CD8-positive, alpha-beta memory T cell (primary cell): ENCODE measurements at regions of chr16 and their contacts with region 1.

Region 1: GRCh38 chr16:67159593-67160406 is at the starts of genes FBXL8 and TRADD:
- DNase-seq: peak; percentile 74 to 84 (median 80)
- H3K4me3 ChIP-seq: peak within 1 kb of the TSS; percentile 95
- H3K4me3 Mint-ChIP-seq: peak within 1 kb of the TSS; percentile 79 to 96 (median 94)
- H3K27ac ChIP-seq: peak within 1 kb of the TSS; percentile 93
- H3K27ac Mint-ChIP-seq: peak within 1 kb of the TSS; percentile 94 to 99 (median 98)
- H3K4me1 ChIP-seq: peaks cover 78% of the 10 kb centered on the region
- H3K4me1 Mint-ChIP-seq: peaks cover 45 to 77% (median 52%) of the 10 kb centered on the region in 3 donors
- H3K27me3 ChIP-seq: peaks cover 26% of the 10 kb centered on the region
- H3K27me3 Mint-ChIP-seq: peaks cover 24 to 29% of the 10 kb centered on the region in 2 donors
- total RNA-seq, gene FBXL8: 10.5 to 14.3 TPM
- total RNA-seq, gene TRADD: 23.8 to 28.7 TPM

Region 2: GRCh38 chr16:66977341-66978113 is 182.3 kb before region 1 on chr16:
- CTCF ChIA-PET with region 1: interaction called, 56 read pairs
- POLR2A ChIA-PET with region 1: no interaction called
- DNase-seq: peak; percentile 75 to 89 (median 81)
- H3K4me3 ChIP-seq: no peak overlapping the region
- H3K4me3 Mint-ChIP-seq: no peak overlapping the region
- H3K27ac ChIP-seq: no peak overlapping the region
- H3K27ac Mint-ChIP-seq: peak overlapping the region in 1 of 8 donors; percentile 58
- H3K4me1 ChIP-seq: no peaks in the 10 kb centered on the region
- H3K4me1 Mint-ChIP-seq: peaks cover 7 to 22% (median 19%) of the 10 kb centered on the region in 3 donors
- H3K27me3 ChIP-seq: no peaks in the 10 kb centered on the region
- H3K27me3 Mint-ChIP-seq: peaks cover 2 to 5% of the 10 kb centered on the region in 2 donors

Region 3: DNA sequence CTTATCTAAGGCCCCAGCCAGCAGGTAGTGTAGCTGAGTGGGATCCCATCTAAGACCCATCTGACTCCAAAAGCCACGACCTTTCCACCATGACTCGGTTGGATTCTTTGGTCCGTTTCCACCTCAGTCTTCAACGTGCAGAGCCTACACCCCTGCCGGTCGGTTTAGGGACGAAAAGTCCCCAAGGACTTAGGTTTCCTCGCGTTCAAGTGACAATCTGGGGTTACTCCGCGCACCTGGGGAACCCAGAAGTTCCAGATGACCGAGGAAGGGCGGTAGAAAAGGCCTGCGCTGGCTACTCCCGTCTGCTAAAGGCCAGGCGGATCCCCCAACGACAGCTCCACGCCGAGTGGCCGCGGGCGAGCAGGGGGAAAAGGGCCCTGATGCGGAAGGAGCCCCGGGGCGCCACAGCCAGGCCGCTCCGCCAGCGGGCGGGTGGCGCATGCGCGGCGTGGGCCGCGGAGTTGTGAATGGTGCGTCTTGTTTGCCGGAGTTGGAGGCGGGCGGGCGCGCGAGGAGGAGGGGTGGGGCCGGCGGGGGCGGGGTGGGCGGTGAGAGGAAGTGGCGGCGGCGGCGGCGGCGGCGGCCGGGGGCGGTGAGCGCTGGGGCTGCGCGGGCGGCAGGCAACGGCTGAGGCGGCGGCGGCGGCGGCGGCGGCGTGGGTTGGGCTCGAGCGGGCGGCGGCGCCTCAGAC is 131.1 kb before region 1 on chr16 and contains the start of gene CBFB:
- CTCF ChIA-PET with region 1: interaction called, 15 read pairs
- POLR2A ChIA-PET with region 1: interaction called, 10 read pairs
- DNase-seq: peak; percentile 91 to 97 (median 96)
- H3K4me3 ChIP-seq: peak within 1 kb of the TSS; percentile 89
- H3K4me3 Mint-ChIP-seq: peak within 1 kb of the TSS; percentile 88 to 98 (median 90)
- H3K27ac ChIP-seq: peak within 1 kb of the TSS; percentile 94
- H3K27ac Mint-ChIP-seq: peak within 1 kb of the TSS; percentile 91 to 99 (median 96)
- H3K4me1 ChIP-seq: peaks cover 39% of the 10 kb centered on the region
- H3K4me1 Mint-ChIP-seq: peaks cover 38 to 46% (median 44%) of the 10 kb centered on the region in 3 donors
- H3K27me3 ChIP-seq: no peaks in the 10 kb centered on the region
- H3K27me3 Mint-ChIP-seq: no peaks in the 10 kb centered on the region
- total RNA-seq, gene CBFB: 132 to 141 TPM

Region 4: GRCh38 chr16:67089101-67089500 is 70.7 kb before region 1 on chr16:
- CTCF ChIA-PET with region 1: no interaction called
- POLR2A ChIA-PET with region 1: no interaction called
- DNase-seq: no peak
- H3K4me3 ChIP-seq: no peak overlapping the region
- H3K4me3 Mint-ChIP-seq: no peak overlapping the region
- H3K27ac ChIP-seq: no peak overlapping the region
- H3K27ac Mint-ChIP-seq: peak overlapping the region in 2 of 8 donors; percentile 8 to 51
- H3K4me1 ChIP-seq: no peaks in the 10 kb centered on the region
- H3K4me1 Mint-ChIP-seq: peaks cover 9 to 20% (median 20%) of the 10 kb centered on the region in 3 donors
- H3K27me3 ChIP-seq: no peaks in the 10 kb centered on the region
- H3K27me3 Mint-ChIP-seq: no peaks in the 10 kb centered on the region

Region 5: GRCh38 chr16:67137605-67138004 is 22.2 kb before region 1 on chr16:
- CTCF ChIA-PET with region 1: interaction called, 48 read pairs
- POLR2A ChIA-PET with region 1: interaction called, 3 read pairs
- DNase-seq: no peak
- H3K4me3 ChIP-seq: no peak overlapping the region
- H3K4me3 Mint-ChIP-seq: no peak overlapping the region
- H3K27ac ChIP-seq: no peak overlapping the region
- H3K27ac Mint-ChIP-seq: peak overlapping the region in 1 of 8 donors; percentile 36
- H3K4me1 ChIP-seq: no peaks in the 10 kb centered on the region
- H3K4me1 Mint-ChIP-seq: no peaks in the 10 kb centered on the region
- H3K27me3 ChIP-seq: no peaks in the 10 kb centered on the region
- H3K27me3 Mint-ChIP-seq: no peaks in the 10 kb centered on the region

Region 6: DNA sequence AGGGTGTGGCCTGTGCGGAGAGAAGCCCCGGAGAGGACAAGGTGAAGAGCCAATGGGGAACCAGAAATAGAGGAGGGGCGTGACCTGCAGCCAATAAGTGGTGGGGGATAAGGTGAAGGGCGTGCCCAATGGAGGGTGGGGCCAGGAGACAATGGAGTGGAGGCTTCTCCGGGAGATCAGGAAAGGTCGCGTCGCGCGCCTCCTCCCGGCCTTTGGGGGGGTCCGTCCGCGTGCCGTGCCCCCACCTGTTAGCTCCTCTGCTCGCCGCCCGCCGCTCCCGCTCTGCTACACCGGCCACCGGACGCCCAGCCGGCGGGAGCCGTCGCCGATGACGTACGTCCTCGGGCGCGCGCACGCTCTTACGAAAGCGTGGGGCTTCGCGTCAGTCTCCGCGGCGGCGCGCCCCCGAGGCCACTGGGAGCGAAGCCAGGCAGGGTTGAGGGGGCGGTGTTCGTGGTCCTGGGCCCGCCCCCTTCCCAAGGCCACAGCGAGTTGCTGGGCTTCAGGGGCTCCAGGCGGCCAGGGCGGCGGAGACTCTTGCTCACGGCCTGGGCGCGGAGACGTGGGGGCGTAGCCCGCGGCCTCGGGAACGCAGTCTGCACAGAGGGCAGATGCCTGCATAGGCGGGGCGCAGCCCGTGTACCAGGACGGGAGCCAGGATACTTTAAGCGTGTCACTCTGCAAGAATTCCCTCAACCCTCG is 24.0 kb after region 1 on chr16 and contains the start of gene MATCAP1:
- CTCF ChIA-PET with region 1: interaction called, 205 read pairs
- POLR2A ChIA-PET with region 1: interaction called, 8 read pairs
- DNase-seq: peak; percentile 88 to 97 (median 96)
- H3K4me3 ChIP-seq: peak within 1 kb of the TSS; percentile 70
- H3K4me3 Mint-ChIP-seq: peak within 1 kb of the TSS in 5 of 7 donors; percentile 48 to 87 (median 71)
- H3K27ac ChIP-seq: peak within 1 kb of the TSS; percentile 91
- H3K27ac Mint-ChIP-seq: no peak within 1 kb of the TSS
- H3K4me1 ChIP-seq: peaks cover 25% of the 10 kb centered on the region
- H3K4me1 Mint-ChIP-seq: peaks cover 9 to 21% (median 10%) of the 10 kb centered on the region in 3 donors
- H3K27me3 ChIP-seq: no peaks in the 10 kb centered on the region
- H3K27me3 Mint-ChIP-seq: peaks cover 0 to 4% of the 10 kb centered on the region in 2 donors
- total RNA-seq, gene MATCAP1: 15.3 to 15.6 TPM

Region 7: DNA sequence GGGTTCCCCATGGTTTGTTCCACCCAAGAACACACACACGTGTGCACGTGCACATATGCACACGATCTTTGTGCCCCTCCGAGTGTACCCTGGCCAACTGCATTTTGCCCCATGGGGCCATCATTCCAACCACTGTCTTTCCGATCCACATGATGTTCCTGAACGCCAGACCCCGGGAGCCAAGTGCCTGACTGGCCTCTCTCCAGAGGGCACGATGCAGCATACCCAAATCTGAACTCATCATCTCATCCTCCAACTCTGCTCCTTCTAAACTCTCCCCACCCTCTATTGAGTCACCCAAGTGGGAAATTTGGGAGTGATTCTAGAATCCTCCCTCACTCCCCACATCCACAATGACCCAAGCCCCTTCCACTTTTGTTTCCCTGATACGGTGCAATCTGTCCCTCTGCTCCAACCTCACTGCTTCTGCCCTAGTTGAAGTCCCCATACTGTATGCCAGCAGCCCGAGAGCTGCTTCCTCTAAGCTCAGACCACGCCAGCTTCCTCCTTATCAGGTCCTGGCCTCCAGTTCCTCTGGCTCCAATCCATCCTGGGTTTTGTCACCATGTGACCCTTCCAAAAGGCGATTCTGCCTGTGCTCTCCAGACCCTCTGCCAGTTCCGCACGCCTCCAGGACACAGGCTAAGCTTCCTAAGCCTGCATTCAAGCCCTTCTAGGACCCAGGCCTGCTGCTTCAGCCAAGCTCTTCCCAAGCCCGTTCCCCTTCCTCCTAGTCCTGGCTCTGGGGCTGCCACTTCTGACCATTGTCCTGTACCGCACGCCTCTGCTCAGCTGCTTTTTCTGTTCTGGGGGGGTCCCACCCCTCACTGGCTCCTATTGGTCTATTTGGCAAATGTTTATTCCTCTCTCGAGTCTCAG is 57.1 kb after region 1 on chr16:
- CTCF ChIA-PET with region 1: no interaction called
- POLR2A ChIA-PET with region 1: no interaction called
- DNase-seq: no peak
- H3K4me3 ChIP-seq: no peak overlapping the region
- H3K4me3 Mint-ChIP-seq: peak overlapping the region in 1 of 7 donors; percentile 37
- H3K27ac ChIP-seq: no peak overlapping the region
- H3K27ac Mint-ChIP-seq: peak overlapping the region in 2 of 8 donors; percentile 25 to 51
- H3K4me1 ChIP-seq: no peaks in the 10 kb centered on the region
- H3K4me1 Mint-ChIP-seq: no peaks in the 10 kb centered on the region
- H3K27me3 ChIP-seq: no peaks in the 10 kb centered on the region
- H3K27me3 Mint-ChIP-seq: no peaks in the 10 kb centered on the region